ENCODE measurements at regions of chr12 and their contacts with region 1.

Region 1: DNA sequence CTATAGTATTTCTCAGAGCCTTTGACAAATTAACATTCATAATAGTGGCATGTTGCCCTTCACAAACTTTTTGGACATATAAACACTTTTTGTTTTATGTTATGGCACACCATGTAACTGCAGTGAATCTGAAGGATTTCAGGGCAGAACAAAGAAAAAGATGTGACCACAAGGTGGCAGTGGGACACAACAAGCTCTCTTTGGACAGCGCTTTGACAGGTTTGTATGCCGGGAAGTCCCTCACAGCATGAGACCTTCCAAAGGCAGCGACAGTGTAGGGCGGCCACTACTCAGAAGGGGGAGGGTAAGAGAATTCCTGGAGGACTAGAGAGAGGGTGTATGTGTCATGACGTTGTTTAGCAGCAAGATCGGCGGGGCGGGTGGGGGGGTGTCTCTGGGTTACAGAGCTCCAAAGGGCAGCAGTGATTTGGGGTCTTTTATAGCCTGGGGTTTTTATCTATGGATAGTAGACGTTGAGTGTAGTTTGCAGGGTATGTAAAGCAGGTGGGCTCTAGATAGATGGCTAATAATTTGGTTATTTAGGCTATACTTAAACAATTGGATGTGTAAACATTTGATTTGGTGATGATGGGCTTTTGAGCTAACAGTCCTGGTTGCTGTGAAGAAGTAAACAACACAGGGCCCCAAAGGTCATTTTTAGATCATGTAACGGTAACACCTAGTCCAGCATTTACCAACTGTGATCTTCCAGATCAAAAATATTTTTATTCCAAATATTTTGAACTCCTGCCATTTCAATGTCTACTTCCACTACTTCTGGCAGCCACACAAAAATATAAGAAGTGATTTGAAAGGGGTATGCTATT is 22.9 kb downstream of the ETFBKMT start:
- DNase-seq: peak; percentile 96
- H3K4me3 ChIP-seq: no peak overlapping the region
- H3K27ac ChIP-seq: peak overlapping the region; percentile 15
- H3K4me1 ChIP-seq: peaks cover 4% of the 10 kb centered on the region
- H3K27me3 ChIP-seq: no peaks in the 10 kb centered on the region
- CTCF ChIP-seq: peak; percentile 80

Region 2: DNA sequence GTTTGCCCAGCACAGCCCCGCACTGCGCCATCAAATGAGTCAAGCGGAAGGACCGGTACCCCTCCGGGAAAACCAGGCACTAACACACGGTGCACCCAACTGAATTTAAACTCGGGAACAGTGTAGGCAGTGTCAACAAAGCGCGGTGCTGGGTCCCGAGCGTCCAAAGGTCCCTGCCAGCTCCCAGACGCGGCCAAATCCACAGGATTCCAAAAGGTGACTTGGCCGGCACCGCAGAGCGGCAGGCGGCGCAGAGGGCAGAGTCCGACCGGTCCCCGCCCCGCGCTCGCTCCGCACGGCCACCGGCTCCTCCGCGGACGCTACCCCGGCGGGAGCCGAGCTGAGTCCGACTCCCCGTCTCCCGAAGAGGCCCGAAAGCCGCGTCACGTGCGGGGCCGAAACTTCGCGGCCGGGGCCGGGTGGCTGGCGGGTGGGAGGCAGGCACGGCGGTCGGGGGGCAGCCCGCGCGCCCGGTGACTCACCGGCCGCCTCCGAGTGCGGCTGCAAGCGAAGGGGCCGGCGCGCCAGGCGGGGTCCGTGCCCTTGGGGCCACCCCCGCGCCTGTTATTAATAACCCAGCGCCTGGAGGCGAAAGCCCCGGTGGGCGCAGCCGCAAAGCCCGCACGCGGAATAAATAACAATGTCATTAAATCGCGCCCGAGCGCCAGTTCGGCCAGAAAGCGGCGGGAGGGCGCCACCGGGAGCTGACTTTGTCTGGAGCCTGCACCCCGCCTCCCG is 92.3 kb before region 1 on chr12:
- CTCF ChIA-PET with region 1: no interaction called
- POLR2A ChIA-PET with region 1: no interaction called
- intact Hi-C with region 1: no loop called
- DNase-seq: peak; percentile 63
- H3K4me3 ChIP-seq: peak overlapping the region; percentile 86
- H3K27ac ChIP-seq: peak overlapping the region; percentile 76
- H3K4me1 ChIP-seq: no peaks in the 10 kb centered on the region
- H3K27me3 ChIP-seq: no peaks in the 10 kb centered on the region
- CTCF ChIP-seq: 0 out of 2 replicates have a peak, but pooled peaks have one; percentile 12

Region 3: GRCh38 chr12:31749024-31749704 is 66.8 kb after region 1 on chr12:
- CTCF ChIA-PET with region 1: no interaction called
- POLR2A ChIA-PET with region 1: no interaction called
- intact Hi-C with region 1: loop called (anchors 5 kb)
- DNase-seq: peak; percentile 88
- H3K4me3 ChIP-seq: no peak overlapping the region
- H3K27ac ChIP-seq: peak overlapping the region; percentile 82
- H3K4me1 ChIP-seq: peaks cover 53% of the 10 kb centered on the region
- H3K27me3 ChIP-seq: no peaks in the 10 kb centered on the region
- CTCF ChIP-seq: no peak

Region 4: GRCh38 chr12:31887109-31887811 is 204.9 kb after region 1 on chr12:
- CTCF ChIA-PET with region 1: no interaction called
- POLR2A ChIA-PET with region 1: no interaction called
- intact Hi-C with region 1: loop called (anchors 10 kb)
- DNase-seq: no peak
- H3K4me3 ChIP-seq: no peak overlapping the region
- H3K27ac ChIP-seq: no peak overlapping the region
- H3K4me1 ChIP-seq: no peaks in the 10 kb centered on the region
- H3K27me3 ChIP-seq: no peaks in the 10 kb centered on the region
- CTCF ChIP-seq: no peak

Region 5: DNA sequence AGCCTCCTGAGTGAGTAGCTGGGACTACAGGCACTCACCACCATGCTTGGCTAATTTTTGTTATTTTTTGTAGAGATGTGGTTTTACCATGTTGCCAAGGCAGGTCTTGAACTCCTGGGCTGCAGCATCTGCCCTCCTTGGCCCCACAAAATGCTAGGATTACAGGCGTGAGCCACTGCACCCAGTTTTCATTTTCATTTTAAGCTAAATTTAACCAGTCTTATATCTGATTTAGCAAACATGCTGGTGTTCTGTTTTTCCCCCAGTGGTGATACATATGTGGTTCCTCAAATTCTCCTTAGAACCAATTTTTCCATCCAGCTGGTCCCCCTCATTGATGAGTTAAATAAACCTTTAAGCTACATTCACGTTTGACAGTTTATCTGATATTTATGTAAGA is 380.5 kb after region 1 on chr12:
- CTCF ChIA-PET with region 1: interaction called, 4 read pairs
- POLR2A ChIA-PET with region 1: no interaction called
- intact Hi-C with region 1: loop called (anchors 2 kb)
- DNase-seq: no peak
- H3K4me3 ChIP-seq: no peak overlapping the region
- H3K27ac ChIP-seq: no peak overlapping the region
- H3K4me1 ChIP-seq: no peaks in the 10 kb centered on the region
- H3K27me3 ChIP-seq: no peaks in the 10 kb centered on the region
- CTCF ChIP-seq: no peak

Region 6: DNA sequence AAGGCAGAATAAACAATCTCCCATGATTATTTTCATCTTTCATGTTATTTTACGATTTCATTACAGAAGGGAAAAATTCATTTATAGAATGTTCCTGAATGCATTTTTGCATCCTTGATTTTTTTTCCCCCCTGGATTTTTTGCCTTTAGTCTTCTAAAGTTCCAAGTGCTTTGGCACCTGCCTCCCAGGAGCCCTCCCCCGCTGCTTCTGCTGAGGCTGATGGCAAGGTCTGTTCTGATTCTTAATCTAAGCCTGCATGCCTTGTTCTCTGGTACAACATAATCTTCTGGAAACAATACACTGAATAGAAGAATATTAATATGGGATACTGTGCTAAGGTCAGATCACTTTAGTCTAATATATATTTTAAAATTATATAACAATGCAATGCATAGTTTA is 1055.4 kb after region 1 on chr12:
- CTCF ChIA-PET with region 1: no interaction called
- POLR2A ChIA-PET with region 1: interaction called, 13 read pairs
- intact Hi-C with region 1: no loop called
- DNase-seq: no peak
- H3K4me3 ChIP-seq: no peak overlapping the region
- H3K27ac ChIP-seq: no peak overlapping the region
- H3K4me1 ChIP-seq: no peaks in the 10 kb centered on the region
- H3K27me3 ChIP-seq: no peaks in the 10 kb centered on the region
- CTCF ChIP-seq: no peak